ENCODE measurements at regions of chr11 and their contacts with region 1.

Region 1: GRCh38 chr11:34366522-34366921 is 8.7 kb upstream of the ABTB2 start:
- DNase-seq: peak; percentile 49 to 50
- H3K4me3 ChIP-seq: no peak overlapping the region
- H3K27ac ChIP-seq: no peak overlapping the region
- H3K4me1 ChIP-seq: peaks cover 0 to 5% (median 0%) of the 10 kb centered on the region in 4 donors
- H3K27me3 ChIP-seq: no peaks in the 10 kb centered on the region
- CTCF ChIP-seq: peak in 2 of 7 experiments; percentile 23 to 40
- EP300 ChIP-seq: no peak
- POLR2A ChIP-seq: no peak

Region 2: GRCh38 chr11:33996498-33997454 is 369.7 kb before region 1 on chr11:
- intact Hi-C with region 1: loop called (anchors 10 kb)
- DNase-seq: peak; percentile 77 to 89
- H3K4me3 ChIP-seq: peak overlapping the region in 1 of 4 donors; percentile 17
- H3K27ac ChIP-seq: no peak overlapping the region
- H3K4me1 ChIP-seq: peaks cover 0 to 16% (median 9%) of the 10 kb centered on the region in 4 donors
- H3K27me3 ChIP-seq: peaks cover 0 to 20% (median 0%) of the 10 kb centered on the region in 3 donors
- CTCF ChIP-seq: peak in 5 of 7 experiments; percentile 75 to 87 (median 81)
- EP300 ChIP-seq: no peak
- POLR2A ChIP-seq: no peak

Region 3: DNA sequence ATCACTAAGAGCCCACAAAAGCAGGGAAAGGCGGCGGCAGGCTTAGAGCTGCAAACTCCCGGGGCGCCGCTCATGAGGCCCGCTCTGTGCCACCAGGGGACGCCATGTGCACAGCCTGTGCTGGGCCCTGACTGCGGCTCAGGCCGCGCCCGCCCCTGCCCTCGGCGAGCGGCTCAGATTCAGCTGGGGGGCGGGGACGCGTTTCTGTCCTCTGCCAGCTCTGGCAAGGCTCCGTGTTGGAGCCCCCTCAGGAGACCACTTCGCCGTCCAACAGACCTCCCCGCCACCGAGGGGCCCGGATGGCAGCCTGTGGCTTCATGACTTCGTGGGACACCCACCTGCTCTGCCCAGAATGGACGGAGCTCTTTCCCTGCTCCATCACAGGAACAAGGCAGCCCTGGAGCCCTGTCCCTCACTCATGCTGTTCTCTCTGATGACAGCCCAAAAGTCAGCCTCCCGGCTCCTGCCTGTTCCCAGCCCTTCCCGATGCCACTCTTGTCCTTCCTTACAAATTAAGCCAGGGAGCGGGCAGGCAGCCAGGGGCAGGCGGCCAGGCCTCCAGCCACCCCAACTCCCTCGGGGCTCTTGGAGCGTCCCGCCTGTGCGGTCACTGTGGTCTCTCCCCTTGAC is 192.0 kb before region 1 on chr11:
- intact Hi-C with region 1: loop called (anchors 5 kb)
- DNase-seq: peak; percentile 86 to 94
- H3K4me3 ChIP-seq: peak overlapping the region; percentile 27 to 37 (median 29)
- H3K27ac ChIP-seq: peak overlapping the region in 1 of 5 donors; percentile 51
- H3K4me1 ChIP-seq: peaks cover 0 to 22% (median 14%) of the 10 kb centered on the region in 4 donors
- H3K27me3 ChIP-seq: peaks cover 0 to 8% (median 7%) of the 10 kb centered on the region in 3 donors
- CTCF ChIP-seq: peak in 5 of 7 experiments; percentile 84 to 96 (median 87)
- EP300 ChIP-seq: no peak
- POLR2A ChIP-seq: no peak

Region 4: GRCh38 chr11:34537656-34538055 is 171.1 kb after region 1 on chr11:
- intact Hi-C with region 1: no loop called
- DNase-seq: no peak
- H3K4me3 ChIP-seq: no peak overlapping the region
- H3K27ac ChIP-seq: no peak overlapping the region
- H3K4me1 ChIP-seq: no peaks in the 10 kb centered on the region
- H3K27me3 ChIP-seq: peaks cover 0 to 26% (median 0%) of the 10 kb centered on the region in 3 donors
- CTCF ChIP-seq: no peak
- EP300 ChIP-seq: no peak
- POLR2A ChIP-seq: no peak

Measured in stomach (tissue), 19 donors.